Naive thymus-derived CD4-positive, alpha-beta T cell (primary cell): ENCODE measurements at regions of chr1 and their contacts with region 1.

Region 1: GRCh38 chr1:27662707-27663393 is 9.1 kb downstream of the IFI6 start:
- DNase-seq: peak; percentile 76 to 94 (median 88)
- ATAC-seq: peak; percentile 80
- H3K4me3 ChIP-seq: peak overlapping the region; percentile 64
- H3K4me3 Mint-ChIP-seq: peak overlapping the region; percentile 82 to 94 (median 90)
- H3K27ac ChIP-seq: peak overlapping the region; percentile 81
- H3K27ac Mint-ChIP-seq: peak overlapping the region; percentile 95 to 100 (median 98)
- H3K4me1 ChIP-seq: peaks cover 38 to 46% of the 10 kb centered on the region in 2 donors
- H3K4me1 Mint-ChIP-seq: peaks cover 39 to 62% (median 48%) of the 10 kb centered on the region in 7 donors
- H3K27me3 ChIP-seq: no peaks in the 10 kb centered on the region
- H3K27me3 Mint-ChIP-seq: no peaks in the 10 kb centered on the region

Region 2: GRCh38 chr1:27300341-27301051 is 362.4 kb before region 1 on chr1:
- CTCF ChIA-PET with region 1: interaction called, 4 read pairs
- POLR2A ChIA-PET with region 1: interaction called, 3 read pairs
- intact Hi-C with region 1: loop called (anchors 1 to 5 kb)
- DNase-seq: peak; percentile 66 to 84 (median 76)
- ATAC-seq: peak; percentile 95
- H3K4me3 ChIP-seq: no peak overlapping the region
- H3K4me3 Mint-ChIP-seq: no peak overlapping the region
- H3K27ac ChIP-seq: no peak overlapping the region
- H3K27ac Mint-ChIP-seq: no peak overlapping the region
- H3K4me1 ChIP-seq: no peaks in the 10 kb centered on the region
- H3K4me1 Mint-ChIP-seq: peaks cover 0 to 9% (median 3%) of the 10 kb centered on the region in 7 donors
- H3K27me3 ChIP-seq: no peaks in the 10 kb centered on the region
- H3K27me3 Mint-ChIP-seq: no peaks in the 10 kb centered on the region

Region 3: GRCh38 chr1:27402349-27402754 is 260.5 kb before region 1 on chr1:
- CTCF ChIA-PET with region 1: interaction called, 7 read pairs
- POLR2A ChIA-PET with region 1: no interaction called
- intact Hi-C with region 1: loop called in 1 of 2 experiments (anchors 1 kb)
- DNase-seq: no peak
- ATAC-seq: peak; percentile 44
- H3K4me3 ChIP-seq: no peak overlapping the region
- H3K4me3 Mint-ChIP-seq: no peak overlapping the region
- H3K27ac ChIP-seq: peak overlapping the region; percentile 48
- H3K27ac Mint-ChIP-seq: peak overlapping the region in 7 of 9 donors; percentile 36 to 95 (median 87)
- H3K4me1 ChIP-seq: peaks cover 0 to 17% of the 10 kb centered on the region in 2 donors
- H3K4me1 Mint-ChIP-seq: peaks cover 10 to 40% (median 33%) of the 10 kb centered on the region in 7 donors
- H3K27me3 ChIP-seq: no peaks in the 10 kb centered on the region
- H3K27me3 Mint-ChIP-seq: no peaks in the 10 kb centered on the region

Region 4: GRCh38 chr1:27525296-27526272 is 137.3 kb before region 1 on chr1:
- CTCF ChIA-PET with region 1: interaction called, 11 read pairs
- POLR2A ChIA-PET with region 1: interaction called, 8 read pairs
- intact Hi-C with region 1: loop called (anchors 1 to 2 kb)
- DNase-seq: peak in 8 of 9 donors; percentile 41 to 67 (median 52)
- ATAC-seq: peak; percentile 36
- H3K4me3 ChIP-seq: peak overlapping the region; percentile 53
- H3K4me3 Mint-ChIP-seq: peak overlapping the region; percentile 72 to 98 (median 93)
- H3K27ac ChIP-seq: peak overlapping the region; percentile 93
- H3K27ac Mint-ChIP-seq: peak overlapping the region; percentile 80 to 99 (median 98)
- H3K4me1 ChIP-seq: peaks cover 62% of the 10 kb centered on the region in 2 donors
- H3K4me1 Mint-ChIP-seq: peaks cover 63 to 82% (median 74%) of the 10 kb centered on the region in 7 donors
- H3K27me3 ChIP-seq: no peaks in the 10 kb centered on the region
- H3K27me3 Mint-ChIP-seq: no peaks in the 10 kb centered on the region

Region 5: GRCh38 chr1:27634177-27634984 is 28.5 kb before region 1 on chr1:
- CTCF ChIA-PET with region 1: interaction called, 7 read pairs
- POLR2A ChIA-PET with region 1: interaction called, 4 read pairs
- intact Hi-C with region 1: loop called in 1 of 2 experiments (anchors 1 kb)
- DNase-seq: peak in 6 of 9 donors; percentile 27 to 79 (median 34)
- ATAC-seq: peak; percentile 27
- H3K4me3 ChIP-seq: peak overlapping the region; percentile 50
- H3K4me3 Mint-ChIP-seq: peak overlapping the region; percentile 36 to 82 (median 74)
- H3K27ac ChIP-seq: peak overlapping the region; percentile 51
- H3K27ac Mint-ChIP-seq: peak overlapping the region; percentile 27 to 84 (median 60)
- H3K4me1 ChIP-seq: peaks cover 38 to 52% of the 10 kb centered on the region in 2 donors
- H3K4me1 Mint-ChIP-seq: peaks cover 43 to 81% (median 69%) of the 10 kb centered on the region in 7 donors
- H3K27me3 ChIP-seq: no peaks in the 10 kb centered on the region
- H3K27me3 Mint-ChIP-seq: no peaks in the 10 kb centered on the region